Activated B cell treated with CpG ODN at 0.5 μM for 24 hours (primary cell): ENCODE measurements at regions of chr3 and their contacts with region 1.

Region 1: DNA sequence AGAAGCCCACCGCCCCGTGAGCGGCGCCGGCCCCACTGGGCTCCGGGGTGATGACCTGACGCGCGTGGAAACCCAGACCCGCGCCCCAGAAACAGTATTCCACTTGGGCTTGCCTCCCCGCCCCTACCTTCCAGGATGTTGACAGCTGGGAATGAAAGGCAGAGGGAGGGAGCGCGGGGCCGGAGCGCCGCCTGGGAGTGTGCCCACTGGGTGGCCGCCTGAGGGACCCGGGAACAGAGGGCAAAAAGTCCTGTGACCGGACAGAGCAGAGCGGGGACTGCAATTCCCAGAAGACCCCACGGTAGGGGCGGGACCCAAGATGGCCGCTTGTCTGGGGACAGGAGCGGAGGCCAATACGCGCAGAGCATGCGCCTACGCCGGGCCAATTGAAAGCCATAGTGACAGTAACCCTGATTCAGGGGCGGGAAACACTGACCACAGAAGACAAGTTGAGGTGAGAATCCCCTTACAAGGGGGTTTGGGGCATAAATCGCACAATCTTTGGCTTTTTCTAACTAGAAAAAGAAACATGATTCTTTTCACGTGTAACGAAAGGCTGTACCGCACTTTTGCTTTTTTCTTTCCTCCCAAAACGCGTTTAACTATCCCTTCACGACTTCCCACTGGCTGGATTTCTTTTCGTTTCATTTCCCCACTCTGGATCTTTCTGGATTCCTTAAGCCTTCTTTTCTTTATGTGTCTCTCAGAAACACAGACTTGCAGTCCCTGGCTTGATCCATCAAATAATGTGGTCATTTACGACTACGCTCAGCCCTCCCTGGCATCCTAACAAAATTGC is at the start of gene FHIT:
- DNase-seq: peak; percentile 85
- ATAC-seq: peak; percentile 91
- H3K4me3 Mint-ChIP-seq: peak within 1 kb of the TSS; percentile 92
- H3K27ac Mint-ChIP-seq: peak within 1 kb of the TSS; percentile 85
- H3K4me1 Mint-ChIP-seq: peaks cover 22% of the 10 kb centered on the region
- H3K27me3 Mint-ChIP-seq: peaks cover 2% of the 10 kb centered on the region
- CTCF ChIP-seq: no peak
- total RNA-seq, gene FHIT: 3.8 and 5.5 TPM in 2 replicates

Region 2: GRCh38 chr3:59839810-59840515 is 1411.4 kb before region 1 on chr3:
- CTCF ChIA-PET with region 1: no interaction called
- POLR2A ChIA-PET with region 1: no interaction called
- intact Hi-C with region 1: loop called (anchors 2 kb)
- DNase-seq: no peak
- ATAC-seq: peak; percentile 90
- H3K4me3 Mint-ChIP-seq: peak overlapping the region; percentile 76
- H3K27ac Mint-ChIP-seq: peak overlapping the region; percentile 95
- H3K4me1 Mint-ChIP-seq: peaks cover 48% of the 10 kb centered on the region
- H3K27me3 Mint-ChIP-seq: no peaks in the 10 kb centered on the region
- CTCF ChIP-seq: no peak

Region 3: GRCh38 chr3:61181874-61182273 is 69.5 kb before region 1 on chr3:
- CTCF ChIA-PET with region 1: no interaction called
- POLR2A ChIA-PET with region 1: no interaction called
- intact Hi-C with region 1: loop called (anchors 1 kb)
- DNase-seq: no peak
- ATAC-seq: peak; percentile 81
- H3K4me3 Mint-ChIP-seq: peak overlapping the region; percentile 35
- H3K27ac Mint-ChIP-seq: peak overlapping the region; percentile 68
- H3K4me1 Mint-ChIP-seq: peaks cover 28% of the 10 kb centered on the region
- H3K27me3 Mint-ChIP-seq: no peaks in the 10 kb centered on the region
- CTCF ChIP-seq: no peak

Region 4: GRCh38 chr3:61520966-61521628 is 269.7 kb after region 1 on chr3:
- CTCF ChIA-PET with region 1: no interaction called
- POLR2A ChIA-PET with region 1: no interaction called
- intact Hi-C with region 1: loop called (anchors 5 kb)
- DNase-seq: no peak
- ATAC-seq: peak; percentile 83
- H3K4me3 Mint-ChIP-seq: no peak overlapping the region
- H3K27ac Mint-ChIP-seq: peak overlapping the region; percentile 25
- H3K4me1 Mint-ChIP-seq: peaks cover 13% of the 10 kb centered on the region
- H3K27me3 Mint-ChIP-seq: no peaks in the 10 kb centered on the region
- CTCF ChIP-seq: no peak